ENCODE measurements at regions of chr6 and their contacts with region 1.

Region 1: DNA sequence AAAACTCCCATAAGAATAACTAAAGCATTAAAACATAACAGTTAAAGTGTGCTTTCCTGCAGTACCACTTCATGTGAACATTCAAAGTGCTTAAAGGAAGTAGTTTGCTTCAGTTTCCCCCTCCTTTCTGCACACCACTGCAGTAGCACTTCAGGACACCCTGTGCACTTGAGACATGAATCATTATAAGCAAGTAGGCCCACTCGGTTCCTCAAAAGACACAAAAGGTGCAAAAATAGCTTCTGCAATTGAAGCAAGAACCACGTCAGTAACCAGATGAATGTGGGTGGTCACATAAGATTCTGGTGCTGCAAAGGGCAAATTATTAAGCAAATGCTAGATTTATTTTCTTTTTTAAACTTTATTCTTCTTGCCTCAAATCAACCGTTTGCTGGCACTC is 160.6 kb downstream of the HIVEP2 start:
- DNase-seq: peak; percentile 86
- ATAC-seq: peak; percentile 99
- H3K4me3 ChIP-seq: no peak overlapping the region
- H3K27ac ChIP-seq: peak overlapping the region; percentile 76
- H3K4me1 ChIP-seq: peaks cover 11% of the 10 kb centered on the region; the same call in 1 of the 2 replicates
- H3K27me3 ChIP-seq: no peaks in the 10 kb centered on the region
- CTCF ChIP-seq: no peak
- EP300 ChIP-seq: peak; percentile 86 to 97
- POLR2A ChIP-seq: no peak
- RAD21 ChIP-seq: peak; percentile 43; the same call in 1 of the 2 replicates

Region 2: DNA sequence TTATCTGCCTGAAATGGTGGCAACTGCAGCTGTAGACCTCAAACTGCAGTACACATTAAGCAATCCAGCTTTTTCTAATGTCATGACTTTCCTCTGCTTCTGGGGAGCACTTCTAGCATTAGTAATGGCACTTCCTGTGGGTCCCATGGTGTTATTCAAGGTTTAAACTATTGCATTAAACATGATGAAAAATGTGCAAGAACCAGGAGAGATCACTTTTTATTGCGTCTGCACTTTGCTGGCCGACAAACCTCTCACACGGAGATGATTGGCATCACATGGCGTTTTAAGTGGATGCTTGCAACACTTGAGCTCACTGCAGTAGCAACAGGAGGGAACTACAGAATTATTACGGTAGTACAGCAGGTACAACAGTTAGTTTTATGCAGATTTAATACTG is 12.2 kb after region 1 on chr6:
- CTCF ChIA-PET with region 1: interaction called, 8 read pairs
- POLR2A ChIA-PET with region 1: interaction called, 16 read pairs
- RAD21 ChIA-PET with region 1: interaction called, 12 read pairs
- SMC1A ChIA-PET with region 1: interaction called, 32 read pairs
- in situ Hi-C with region 1: no loop called
- intact Hi-C with region 1: no loop called
- DNase-seq: no peak
- ATAC-seq: no peak
- H3K4me3 ChIP-seq: no peak overlapping the region
- H3K27ac ChIP-seq: no peak overlapping the region
- H3K4me1 ChIP-seq: peaks cover 17% of the 10 kb centered on the region
- H3K27me3 ChIP-seq: no peaks in the 10 kb centered on the region
- CTCF ChIP-seq: no peak
- EP300 ChIP-seq: no peak
- POLR2A ChIP-seq: no peak
- RAD21 ChIP-seq: no peak

Region 3: GRCh38 chr6:142802124-142802523 is 17.8 kb after region 1 on chr6:
- CTCF ChIA-PET with region 1: interaction called, 8 read pairs
- POLR2A ChIA-PET with region 1: interaction called, 8 read pairs
- RAD21 ChIA-PET with region 1: interaction called, 15 read pairs
- SMC1A ChIA-PET with region 1: interaction called, 45 read pairs
- in situ Hi-C with region 1: no loop called
- intact Hi-C with region 1: no loop called
- DNase-seq: no peak
- ATAC-seq: peak; percentile 44
- H3K4me3 ChIP-seq: no peak overlapping the region
- H3K27ac ChIP-seq: no peak overlapping the region
- H3K4me1 ChIP-seq: peaks cover 27% of the 10 kb centered on the region
- H3K27me3 ChIP-seq: no peaks in the 10 kb centered on the region
- CTCF ChIP-seq: no peak
- EP300 ChIP-seq: no peak
- POLR2A ChIP-seq: no peak
- RAD21 ChIP-seq: no peak

Region 4: DNA sequence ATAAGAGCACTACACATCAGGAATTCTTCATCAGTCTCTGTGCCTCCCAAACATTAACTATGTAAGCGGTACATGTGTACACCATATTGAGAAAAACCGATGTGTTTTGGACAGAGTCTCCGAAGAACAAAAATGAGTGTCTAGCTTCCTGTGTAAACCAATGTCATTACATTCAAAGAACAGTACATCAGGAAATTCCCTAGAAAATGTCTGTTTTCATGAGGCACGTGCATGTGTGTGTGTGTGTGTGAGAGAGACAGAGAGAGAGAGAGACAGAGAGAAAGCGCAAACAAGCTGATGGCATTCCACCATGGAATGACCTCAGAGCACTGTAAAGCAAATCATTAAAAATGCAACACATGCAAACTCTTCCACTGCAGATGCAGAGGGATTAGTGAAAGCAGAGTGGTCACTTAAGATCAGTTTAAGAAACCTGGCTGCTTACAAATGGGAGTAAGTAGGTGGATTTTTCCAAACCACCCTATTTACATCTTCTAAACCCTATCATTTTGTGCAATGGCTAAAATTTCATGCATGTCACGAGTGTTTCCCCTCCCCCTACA is 26.7 kb after region 1 on chr6:
- CTCF ChIA-PET with region 1: interaction called, 3 read pairs
- POLR2A ChIA-PET with region 1: interaction called, 6 read pairs
- RAD21 ChIA-PET with region 1: interaction called, 7 read pairs
- SMC1A ChIA-PET with region 1: interaction called, 9 read pairs
- in situ Hi-C with region 1: no loop called
- intact Hi-C with region 1: loop called (anchors 2 kb)
- DNase-seq: no peak
- ATAC-seq: peak; percentile 61
- H3K4me3 ChIP-seq: no peak overlapping the region
- H3K27ac ChIP-seq: peak overlapping the region; percentile 17
- H3K4me1 ChIP-seq: peaks cover 13% of the 10 kb centered on the region
- H3K27me3 ChIP-seq: no peaks in the 10 kb centered on the region
- CTCF ChIP-seq: no peak
- EP300 ChIP-seq: peak; percentile 28 to 37; a peak in 2 of 4 replicates
- POLR2A ChIP-seq: no peak
- RAD21 ChIP-seq: no peak

Measured in GM12878 (cell line).